HepG2 (cell line): ENCODE measurements at regions of chrX and their contacts with region 1.

Region 1: DNA sequence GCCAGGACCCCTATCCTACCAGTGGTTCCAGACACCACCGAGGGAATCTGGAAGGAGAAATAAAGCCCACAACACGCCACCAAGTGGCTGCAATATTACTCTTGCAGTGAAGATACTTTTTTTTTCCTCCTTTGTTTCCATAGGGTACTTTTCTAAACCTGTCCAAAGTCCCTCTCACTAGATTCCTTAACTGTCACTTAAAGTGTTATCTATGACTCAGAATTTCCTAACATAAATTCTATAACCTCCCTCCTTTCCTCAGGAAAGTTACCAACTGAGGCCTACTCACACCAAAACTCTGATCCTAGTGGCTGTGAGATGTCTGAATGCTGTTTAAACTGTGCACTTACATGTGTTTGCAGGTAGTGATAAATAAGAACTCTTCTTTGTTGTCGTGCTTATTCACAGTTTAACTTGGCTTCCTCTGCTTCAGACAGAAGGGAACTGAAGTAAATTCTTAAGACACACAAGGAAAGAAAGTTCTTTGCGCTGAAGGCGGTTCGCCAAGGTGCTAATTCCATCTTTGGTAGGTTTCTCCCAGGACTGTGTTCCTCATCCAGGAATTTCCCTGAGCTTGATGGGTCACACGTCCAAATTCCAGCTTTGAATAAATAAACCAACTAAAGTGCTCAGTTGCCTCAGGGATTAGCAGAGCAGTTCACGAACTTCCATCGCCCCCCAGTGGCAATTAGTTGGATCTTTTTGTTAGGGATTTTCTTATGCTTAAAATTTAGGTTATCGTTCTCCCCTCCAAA is 10.7 kb upstream of the HCCS start:
- DNase-seq: peak; percentile 76
- ATAC-seq: peak; percentile 90
- H3K4me3 ChIP-seq: no peak overlapping the region; a peak in 1 of 6 replicates
- H3K27ac ChIP-seq: peak overlapping the region; percentile 81
- H3K4me1 ChIP-seq: peaks cover 50% of the 10 kb centered on the region
- H3K27me3 ChIP-seq: no peaks in the 10 kb centered on the region
- CTCF ChIP-seq: peak; percentile 71
- EP300 ChIP-seq: 0 out of 4 replicates have a peak, but pooled peaks of 1 of the 2 experiments have one; percentile 6
- POLR2A ChIP-seq: no peak
- RAD21 ChIP-seq: peak; percentile 52; the same call in 1 of the 2 replicates

Region 2: DNA sequence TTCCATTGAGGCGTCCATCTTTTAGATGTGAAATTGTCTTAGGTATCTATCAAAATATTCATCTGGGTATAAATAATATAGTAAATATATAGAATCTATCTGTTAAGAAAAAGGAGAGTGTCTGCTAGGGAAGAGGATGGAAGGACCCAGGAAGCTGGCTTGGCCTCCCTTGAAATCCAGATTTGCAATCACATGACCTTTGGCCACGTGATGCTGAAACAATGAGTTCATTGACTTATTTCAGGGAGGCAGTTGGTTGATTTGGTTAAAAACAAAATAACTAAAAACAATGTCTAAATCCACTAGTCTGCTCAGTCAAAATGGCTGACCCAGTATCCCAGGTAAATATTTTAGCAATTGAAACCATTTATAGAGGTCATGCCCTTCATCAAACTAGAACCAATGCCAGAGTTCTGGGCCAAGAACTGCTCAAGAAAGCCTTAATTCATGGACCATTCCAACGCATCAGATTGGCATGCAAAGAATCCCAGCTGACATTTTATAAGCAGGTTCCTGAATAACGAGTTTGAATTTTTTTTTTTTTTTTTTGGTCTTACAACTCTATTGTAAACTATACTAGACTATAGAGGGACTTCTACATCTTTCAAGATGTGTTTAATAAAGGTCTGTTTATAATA is 652.8 kb before region 1 on chrX:
- CTCF ChIA-PET with region 1: interaction called, 3 read pairs
- POLR2A ChIA-PET with region 1: no interaction called
- in situ Hi-C with region 1: loop called (anchors 10 kb)
- intact Hi-C with region 1: loop called (anchors 1 kb)
- DNase-seq: no peak
- ATAC-seq: no peak
- H3K4me3 ChIP-seq: no peak overlapping the region
- H3K27ac ChIP-seq: no peak overlapping the region
- H3K4me1 ChIP-seq: no peaks in the 10 kb centered on the region
- H3K27me3 ChIP-seq: no peaks in the 10 kb centered on the region
- CTCF ChIP-seq: no peak
- EP300 ChIP-seq: no peak
- POLR2A ChIP-seq: no peak
- RAD21 ChIP-seq: no peak

Region 3: DNA sequence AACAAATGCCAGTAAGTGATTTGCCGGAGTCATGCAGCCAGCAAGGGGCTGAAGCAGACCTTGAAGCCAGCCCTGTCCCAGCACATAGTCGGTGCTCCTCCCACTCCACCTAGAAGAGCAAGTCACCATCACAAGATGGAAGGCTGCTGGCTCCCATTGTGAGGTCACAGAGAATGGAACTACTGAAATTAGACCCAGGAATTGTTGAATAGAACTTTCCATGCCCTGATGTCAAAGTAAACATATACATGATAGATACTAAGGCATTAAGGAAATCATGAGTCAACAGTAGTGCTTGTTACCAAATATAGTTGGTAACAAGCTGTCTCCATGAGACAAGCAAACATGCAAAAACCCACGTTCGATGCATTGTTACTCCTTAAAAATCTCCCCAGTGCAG is 303.0 kb before region 1 on chrX:
- CTCF ChIA-PET with region 1: no interaction called
- POLR2A ChIA-PET with region 1: no interaction called
- in situ Hi-C with region 1: no loop called
- intact Hi-C with region 1: loop called (anchors 10 kb)
- DNase-seq: no peak
- ATAC-seq: no peak
- H3K4me3 ChIP-seq: no peak overlapping the region
- H3K27ac ChIP-seq: no peak overlapping the region
- H3K4me1 ChIP-seq: no peaks in the 10 kb centered on the region
- H3K27me3 ChIP-seq: no peaks in the 10 kb centered on the region
- CTCF ChIP-seq: no peak
- EP300 ChIP-seq: no peak
- POLR2A ChIP-seq: no peak
- RAD21 ChIP-seq: no peak

Region 4: DNA sequence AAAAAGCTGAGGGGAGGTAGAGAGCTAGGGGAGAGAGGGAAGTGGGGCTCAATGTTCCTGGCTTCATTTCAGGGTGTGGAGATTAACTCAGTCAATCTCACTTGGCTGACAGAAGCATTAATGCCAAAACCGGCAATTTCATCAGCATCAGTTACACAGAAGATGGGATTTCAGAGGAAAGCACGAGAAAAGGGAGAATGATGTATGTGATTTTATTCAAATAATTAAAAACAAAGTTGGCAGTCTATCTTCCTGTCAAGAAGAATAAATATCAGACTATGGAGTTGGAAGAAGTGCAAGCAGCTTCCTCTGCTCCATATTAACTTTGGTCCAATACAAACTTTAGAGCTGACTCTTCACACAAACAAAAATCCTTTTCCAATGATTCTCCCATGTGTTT is 18.9 kb before region 1 on chrX:
- CTCF ChIA-PET with region 1: no interaction called
- POLR2A ChIA-PET with region 1: no interaction called
- in situ Hi-C with region 1: no loop called
- intact Hi-C with region 1: no loop called
- DNase-seq: no peak
- ATAC-seq: no peak
- H3K4me3 ChIP-seq: no peak overlapping the region
- H3K27ac ChIP-seq: no peak overlapping the region
- H3K4me1 ChIP-seq: no peaks in the 10 kb centered on the region
- H3K27me3 ChIP-seq: no peaks in the 10 kb centered on the region
- CTCF ChIP-seq: no peak
- EP300 ChIP-seq: no peak
- POLR2A ChIP-seq: no peak
- RAD21 ChIP-seq: no peak

Region 5: GRCh38 chrX:11117745-11118144 is 17.3 kb after region 1 on chrX:
- CTCF ChIA-PET with region 1: no interaction called
- POLR2A ChIA-PET with region 1: no interaction called
- in situ Hi-C with region 1: no loop called
- intact Hi-C with region 1: no loop called
- DNase-seq: no peak
- ATAC-seq: no peak
- H3K4me3 ChIP-seq: no peak overlapping the region
- H3K27ac ChIP-seq: no peak overlapping the region
- H3K4me1 ChIP-seq: peaks cover 8% of the 10 kb centered on the region
- H3K27me3 ChIP-seq: no peaks in the 10 kb centered on the region
- CTCF ChIP-seq: no peak
- EP300 ChIP-seq: no peak
- POLR2A ChIP-seq: no peak
- RAD21 ChIP-seq: no peak

Region 6: GRCh38 chrX:12349201-12349600 is 1248.7 kb after region 1 on chrX:
- CTCF ChIA-PET with region 1: no interaction called
- POLR2A ChIA-PET with region 1: no interaction called
- in situ Hi-C with region 1: no loop called
- intact Hi-C with region 1: no loop called
- DNase-seq: no peak
- ATAC-seq: no peak
- H3K4me3 ChIP-seq: no peak overlapping the region
- H3K27ac ChIP-seq: no peak overlapping the region
- H3K4me1 ChIP-seq: no peaks in the 10 kb centered on the region
- H3K27me3 ChIP-seq: no peaks in the 10 kb centered on the region
- CTCF ChIP-seq: no peak
- EP300 ChIP-seq: no peak
- POLR2A ChIP-seq: no peak
- RAD21 ChIP-seq: no peak